HepG2 (cell line): ENCODE measurements at regions of chr2 and their contacts with region 1.

Region 1: GRCh38 chr2:241774646-241775222 is 1.9 kb upstream of the GAL3ST2 start:
- DNase-seq: peak; percentile 79
- ATAC-seq: peak; percentile 12
- H3K4me3 ChIP-seq: peak overlapping the region; percentile 49 to 82 (median 63)
- H3K27ac ChIP-seq: peak overlapping the region; percentile 92
- H3K4me1 ChIP-seq: peaks cover 75% of the 10 kb centered on the region
- H3K27me3 ChIP-seq: no peaks in the 10 kb centered on the region; a peak in 1 of 5 replicates
- CTCF ChIP-seq: no peak
- EP300 ChIP-seq: no peak
- POLR2A ChIP-seq: peak in 1 of 2 experiments; percentile 35; a peak in 1 of 4 replicates
- RAD21 ChIP-seq: no peak; the same call in 1 of the 2 replicates

Region 2: DNA sequence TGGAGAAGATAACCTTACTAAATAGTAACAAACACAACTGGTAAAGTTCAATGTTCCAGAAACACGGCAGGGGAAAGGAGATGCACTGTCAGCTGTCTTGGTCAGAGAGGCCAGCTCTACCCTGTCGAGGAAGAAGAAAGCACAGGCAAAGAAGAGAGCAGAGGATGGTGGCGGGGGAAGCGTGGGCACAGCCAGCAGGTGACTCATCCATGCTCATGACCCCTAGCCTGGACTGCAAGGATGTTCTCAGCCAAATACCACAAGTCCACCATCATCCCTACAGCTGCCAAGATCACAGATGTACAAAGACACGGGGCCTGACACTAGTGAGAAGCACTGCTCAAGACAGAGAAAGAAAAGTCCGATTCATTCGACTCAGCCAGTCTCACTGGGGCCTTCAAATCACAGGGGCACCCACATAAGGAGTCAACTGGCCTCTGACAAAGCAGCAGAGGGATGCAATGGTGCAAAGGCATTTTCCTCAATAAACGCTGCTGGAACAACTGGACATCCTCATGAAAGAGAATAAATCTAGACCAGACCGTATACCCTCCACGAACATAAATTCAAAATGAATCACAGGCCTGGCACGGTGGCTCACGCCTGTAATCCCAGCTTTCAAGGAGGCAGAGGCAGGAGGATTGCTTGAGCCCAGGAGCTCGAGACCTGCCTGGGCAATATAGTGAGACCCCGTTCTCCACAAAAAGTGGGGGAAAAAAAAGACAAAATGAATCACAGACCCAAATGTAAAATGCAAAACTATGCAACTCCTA is 93.7 kb before region 1 on chr2:
- CTCF ChIA-PET with region 1: no interaction called
- POLR2A ChIA-PET with region 1: no interaction called
- in situ Hi-C with region 1: no loop called
- intact Hi-C with region 1: no loop called
- DNase-seq: no peak
- ATAC-seq: peak; percentile 15; the same call in 2 of the 3 replicates
- H3K4me3 ChIP-seq: no peak overlapping the region
- H3K27ac ChIP-seq: no peak overlapping the region
- H3K4me1 ChIP-seq: peaks cover 14% of the 10 kb centered on the region
- H3K27me3 ChIP-seq: no peaks in the 10 kb centered on the region; a peak in 1 of 5 replicates
- CTCF ChIP-seq: no peak
- EP300 ChIP-seq: no peak
- POLR2A ChIP-seq: no peak
- RAD21 ChIP-seq: no peak

Region 3: GRCh38 chr2:241734467-241735208 is 40.1 kb before region 1 on chr2 and contains the start of gene D2HGDH:
- CTCF ChIA-PET with region 1: no interaction called
- POLR2A ChIA-PET with region 1: interaction called, 113 read pairs
- in situ Hi-C with region 1: no loop called
- intact Hi-C with region 1: loop called (anchors 1 kb)
- DNase-seq: peak; percentile 80
- ATAC-seq: peak; percentile 81
- H3K4me3 ChIP-seq: peak within 1 kb of the TSS; percentile 80 to 100 (median 96)
- H3K27ac ChIP-seq: peak within 1 kb of the TSS; percentile 91
- H3K4me1 ChIP-seq: peaks cover 28% of the 10 kb centered on the region
- H3K27me3 ChIP-seq: no peaks in the 10 kb centered on the region; a peak in 2 of 5 replicates
- CTCF ChIP-seq: no peak
- EP300 ChIP-seq: peak in 1 of 2 experiments; percentile 4; a peak in 1 of 4 replicates
- POLR2A ChIP-seq: peak in 1 of 2 experiments; percentile 75; a peak in 1 of 4 replicates
- RAD21 ChIP-seq: peak; percentile 64
- total RNA-seq, gene D2HGDH: 10.2 and 20.3 TPM in 2 replicates

Region 4: GRCh38 chr2:241788572-241788971 is 13.8 kb after region 1 on chr2:
- CTCF ChIA-PET with region 1: no interaction called
- POLR2A ChIA-PET with region 1: interaction called, 100 read pairs
- in situ Hi-C with region 1: no loop called
- intact Hi-C with region 1: no loop called
- DNase-seq: no peak
- ATAC-seq: no peak
- H3K4me3 ChIP-seq: no peak overlapping the region
- H3K27ac ChIP-seq: no peak overlapping the region
- H3K4me1 ChIP-seq: peaks cover 25% of the 10 kb centered on the region
- H3K27me3 ChIP-seq: no peaks in the 10 kb centered on the region
- CTCF ChIP-seq: peak; percentile 33
- EP300 ChIP-seq: no peak
- POLR2A ChIP-seq: no peak
- RAD21 ChIP-seq: no peak

Region 5: GRCh38 chr2:241810307-241811210 is 35.8 kb after region 1 on chr2:
- CTCF ChIA-PET with region 1: no interaction called
- POLR2A ChIA-PET with region 1: interaction called, 218 read pairs
- in situ Hi-C with region 1: loop called (anchors 5 kb)
- intact Hi-C with region 1: loop called (anchors 2 kb)
- DNase-seq: no peak
- ATAC-seq: no peak
- H3K4me3 ChIP-seq: peak overlapping the region; percentile 73 to 85 (median 81)
- H3K27ac ChIP-seq: peak overlapping the region; percentile 84
- H3K4me1 ChIP-seq: peaks cover 36% of the 10 kb centered on the region
- H3K27me3 ChIP-seq: no peaks in the 10 kb centered on the region; a peak in 1 of 5 replicates
- CTCF ChIP-seq: no peak
- EP300 ChIP-seq: no peak
- POLR2A ChIP-seq: no peak
- RAD21 ChIP-seq: no peak